Prostate gland (tissue), 2 donors: ENCODE measurements at regions of chr14 and their contacts with region 1.

Region 1: DNA sequence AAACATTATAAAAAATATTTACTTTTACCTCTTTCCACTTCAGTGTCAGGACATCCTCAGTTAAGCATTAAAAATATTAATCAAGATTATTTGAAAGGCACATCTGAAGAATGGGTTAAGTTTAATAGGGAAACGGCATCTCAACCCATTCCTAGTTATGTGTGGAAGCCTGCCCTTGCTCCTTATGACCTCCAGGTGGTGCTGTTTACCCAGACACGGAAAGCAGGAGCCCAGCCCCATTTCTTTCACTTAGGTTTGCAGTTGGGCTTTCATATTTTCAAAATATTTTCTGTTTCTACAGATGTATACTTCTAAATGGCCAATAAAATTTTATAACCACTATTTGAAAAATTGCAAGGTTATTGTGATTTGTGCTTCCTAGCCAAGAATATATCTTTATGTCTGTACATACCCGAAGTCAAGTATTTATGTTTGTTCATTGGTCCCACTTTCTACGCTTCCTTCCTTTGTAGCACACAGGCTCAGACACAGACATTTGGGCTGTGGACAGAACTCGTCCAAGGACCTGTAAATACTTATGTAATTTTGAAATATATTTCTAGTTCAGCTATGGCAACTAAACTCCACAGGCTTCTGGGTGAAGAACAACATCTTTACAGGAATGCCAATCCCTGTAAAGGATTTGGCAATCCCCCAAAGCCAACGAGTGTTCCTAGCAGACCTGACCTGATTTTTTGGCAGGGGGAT is 247.1 kb downstream of the AKAP6 start:
- DNase-seq: peak; percentile 43
- H3K4me3 ChIP-seq: no peak overlapping the region
- H3K27ac ChIP-seq: no peak overlapping the region
- H3K4me1 ChIP-seq: no peaks in the 10 kb centered on the region
- H3K27me3 ChIP-seq: no peaks in the 10 kb centered on the region
- CTCF ChIP-seq: peak; percentile 72 to 89 (median 86)
- POLR2A ChIP-seq: no peak

Region 2: DNA sequence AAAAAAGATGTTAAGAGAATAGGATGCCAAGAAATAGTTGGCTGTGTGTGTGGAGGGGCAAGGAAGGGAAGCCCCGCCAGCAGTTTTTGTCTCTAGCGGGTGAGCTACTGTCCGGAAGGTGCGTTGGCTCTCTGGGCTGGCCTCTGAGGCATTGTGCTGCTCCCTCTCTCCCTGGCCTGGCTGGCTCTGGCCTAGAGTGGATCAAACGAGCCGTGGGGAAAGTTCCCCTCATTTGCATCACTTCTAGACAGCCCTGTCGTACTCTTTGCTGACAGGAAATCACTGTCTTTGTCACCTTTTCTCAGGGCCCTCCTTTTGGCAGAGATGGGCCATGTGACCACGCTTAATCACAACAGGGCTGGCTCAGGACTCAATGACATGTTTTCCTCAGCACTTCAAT is 126.3 kb after region 1 on chr14:
- intact Hi-C with region 1: loop called (anchors 10 kb)
- DNase-seq: peak; percentile 11
- H3K4me3 ChIP-seq: no peak overlapping the region
- H3K27ac ChIP-seq: peak overlapping the region in 1 of 2 donors; percentile 28
- H3K4me1 ChIP-seq: no peaks in the 10 kb centered on the region
- H3K27me3 ChIP-seq: no peaks in the 10 kb centered on the region
- CTCF ChIP-seq: no peak
- POLR2A ChIP-seq: no peak

Region 3: GRCh38 chr14:33280646-33281045 is 704.4 kb after region 1 on chr14:
- intact Hi-C with region 1: no loop called
- DNase-seq: no peak
- H3K4me3 ChIP-seq: no peak overlapping the region
- H3K27ac ChIP-seq: no peak overlapping the region
- H3K4me1 ChIP-seq: no peaks in the 10 kb centered on the region
- H3K27me3 ChIP-seq: no peaks in the 10 kb centered on the region
- CTCF ChIP-seq: no peak
- POLR2A ChIP-seq: no peak

Region 4: GRCh38 chr14:33792720-33793368 is 1216.6 kb after region 1 on chr14:
- intact Hi-C with region 1: loop called (anchors 2 kb)
- DNase-seq: peak; percentile 84
- H3K4me3 ChIP-seq: peak overlapping the region in 1 of 2 donors; percentile 0
- H3K27ac ChIP-seq: no peak overlapping the region
- H3K4me1 ChIP-seq: peaks cover 4% of the 10 kb centered on the region
- H3K27me3 ChIP-seq: no peaks in the 10 kb centered on the region
- CTCF ChIP-seq: peak; percentile 83 to 95 (median 88)
- POLR2A ChIP-seq: no peak